ENCODE measurements at regions of chr11 and their contacts with region 1.

Region 1: DNA sequence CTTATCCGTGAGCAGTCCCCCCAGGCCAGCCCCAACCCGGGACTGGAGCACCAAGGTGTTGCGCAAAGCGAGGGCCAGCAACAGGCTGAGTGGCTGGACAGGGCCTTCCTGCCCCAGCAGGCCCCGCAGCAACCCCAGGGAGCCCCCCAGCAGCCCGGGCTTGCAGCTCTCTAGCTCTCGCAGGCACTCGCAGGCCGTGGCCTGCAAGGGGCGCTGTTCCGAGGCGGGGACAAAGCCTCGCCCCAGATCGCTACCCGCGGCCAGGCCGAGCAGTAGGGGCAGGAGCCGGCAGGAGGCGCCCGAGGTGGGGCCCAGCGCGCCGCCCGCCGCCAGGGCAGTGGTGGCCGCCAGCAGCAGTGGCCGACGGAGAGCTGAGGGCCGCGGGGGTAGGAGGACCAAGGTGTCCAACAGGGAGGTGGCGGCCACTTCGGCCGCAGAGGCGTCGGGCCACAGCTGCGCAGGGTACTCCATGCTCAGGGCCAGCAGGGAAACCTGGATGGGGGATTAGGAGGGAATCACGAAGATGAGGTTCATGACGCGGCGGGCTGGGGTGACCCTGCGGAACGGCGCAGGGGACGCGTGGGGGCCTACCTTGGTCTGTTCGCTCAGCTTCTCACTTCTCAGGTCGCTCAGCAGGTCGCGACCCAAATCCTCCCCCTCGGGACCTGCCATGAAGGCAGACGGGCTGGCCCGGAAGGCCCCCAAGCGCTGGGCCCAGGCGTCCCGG is 762 bp downstream of the AP5B1 start:
- DNase-seq: peak; percentile 81 to 92 (median 91)
- H3K4me3 ChIP-seq: peak overlapping the region; percentile 56 to 85 (median 72)
- H3K27ac ChIP-seq: peak overlapping the region in 1 of 2 experiments; percentile 77
- H3K4me1 ChIP-seq: peaks cover 0 to 37% (median 19%) of the 10 kb centered on the region in 4 experiments
- H3K27me3 ChIP-seq: peaks cover 0 to 33% (median 6%) of the 10 kb centered on the region in 5 experiments

Region 2: GRCh38 chr11:65236194-65237059 is 543.6 kb before region 1 on chr11:
- CTCF ChIA-PET with region 1: no interaction called
- POLR2A ChIA-PET with region 1: no interaction called
- DNase-seq: peak in 2 of 3 donors; percentile 22 to 30
- H3K4me3 ChIP-seq: no peak overlapping the region
- H3K27ac ChIP-seq: no peak overlapping the region
- H3K4me1 ChIP-seq: no peaks in the 10 kb centered on the region
- H3K27me3 ChIP-seq: no peaks in the 10 kb centered on the region

Region 3: DNA sequence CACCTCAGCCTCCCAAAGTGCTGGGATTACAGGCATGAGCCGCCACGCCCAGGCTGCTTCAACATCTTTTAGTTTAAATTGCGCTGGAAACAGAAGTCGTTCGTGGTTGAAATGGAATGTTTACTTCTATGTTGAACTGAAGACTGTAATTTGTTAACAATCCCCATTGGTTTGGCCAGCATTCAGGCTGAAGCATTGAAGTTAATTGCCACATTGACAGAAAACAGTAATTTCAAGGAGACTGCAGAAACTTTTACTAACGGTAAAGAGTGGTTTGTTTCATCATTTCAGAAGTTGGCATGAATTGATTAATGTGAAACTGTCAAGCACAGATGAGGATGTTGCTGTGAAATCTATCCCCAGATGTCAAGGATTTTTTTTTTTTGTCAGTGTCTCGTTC is 13.5 kb before region 1 on chr11:
- CTCF ChIA-PET with region 1: interaction called, 26 read pairs
- POLR2A ChIA-PET with region 1: no interaction called
- DNase-seq: peak in 2 of 3 donors; percentile 54 to 66
- H3K4me3 ChIP-seq: no peak overlapping the region
- H3K27ac ChIP-seq: no peak overlapping the region
- H3K4me1 ChIP-seq: peaks cover 0 to 6% (median 2%) of the 10 kb centered on the region in 4 experiments
- H3K27me3 ChIP-seq: no peaks in the 10 kb centered on the region

Region 4: DNA sequence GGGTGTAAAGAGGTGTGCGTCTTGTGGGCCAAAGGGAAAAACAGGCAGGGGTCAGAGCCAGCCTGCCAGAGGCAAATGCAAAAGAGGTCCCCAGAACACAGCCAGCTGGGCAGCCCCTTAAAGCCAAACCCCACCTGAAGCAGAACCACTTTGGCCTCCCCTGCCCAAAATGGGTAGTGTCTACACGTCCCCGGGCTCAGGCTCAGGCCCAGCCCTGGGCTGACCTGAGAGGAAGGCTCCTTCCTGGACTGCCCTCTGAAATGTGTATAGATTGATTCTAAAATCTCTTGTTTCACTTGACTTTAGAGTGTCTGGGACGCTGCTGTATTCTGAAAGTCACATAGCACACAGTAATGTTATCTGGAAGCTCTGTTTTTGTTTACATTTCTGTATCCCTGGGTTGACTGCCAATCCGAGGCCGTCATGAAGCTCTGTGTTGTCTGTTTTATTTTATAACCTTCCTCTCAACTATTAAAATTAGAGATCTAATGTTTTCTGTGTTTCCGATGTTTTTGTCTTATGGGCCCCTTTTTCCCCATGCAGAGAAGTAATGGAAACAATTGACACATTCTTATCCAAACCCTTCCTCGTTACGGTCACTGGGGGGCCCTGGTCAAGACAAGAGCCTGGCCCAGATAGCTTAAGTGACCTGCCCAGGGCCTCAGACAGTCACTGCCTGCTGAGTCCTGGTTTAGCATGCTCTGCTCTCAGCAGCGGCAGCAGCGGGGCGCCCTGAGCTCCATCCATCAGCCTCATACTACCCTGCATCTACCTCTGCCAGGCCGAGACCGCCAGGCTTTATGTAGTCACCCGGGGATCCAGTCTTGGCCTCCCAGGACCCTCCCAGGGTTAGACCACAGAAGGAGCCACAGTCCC is 16.9 kb after region 1 on chr11:
- CTCF ChIA-PET with region 1: interaction called, 81 read pairs
- POLR2A ChIA-PET with region 1: interaction called, 3 read pairs
- DNase-seq: no peak
- H3K4me3 ChIP-seq: no peak overlapping the region
- H3K27ac ChIP-seq: no peak overlapping the region
- H3K4me1 ChIP-seq: peaks cover 0 to 7% (median 6%) of the 10 kb centered on the region in 4 experiments
- H3K27me3 ChIP-seq: peaks cover 0 to 9% (median 0%) of the 10 kb centered on the region in 5 experiments

Region 5: GRCh38 chr11:65810046-65810868 is 30.2 kb after region 1 on chr11:
- CTCF ChIA-PET with region 1: interaction called, 137 read pairs
- POLR2A ChIA-PET with region 1: no interaction called
- DNase-seq: peak in 2 of 3 donors; percentile 40 to 51
- H3K4me3 ChIP-seq: no peak overlapping the region
- H3K27ac ChIP-seq: no peak overlapping the region
- H3K4me1 ChIP-seq: no peaks in the 10 kb centered on the region
- H3K27me3 ChIP-seq: peaks cover 0 to 4% (median 0%) of the 10 kb centered on the region in 5 experiments

Region 6: DNA sequence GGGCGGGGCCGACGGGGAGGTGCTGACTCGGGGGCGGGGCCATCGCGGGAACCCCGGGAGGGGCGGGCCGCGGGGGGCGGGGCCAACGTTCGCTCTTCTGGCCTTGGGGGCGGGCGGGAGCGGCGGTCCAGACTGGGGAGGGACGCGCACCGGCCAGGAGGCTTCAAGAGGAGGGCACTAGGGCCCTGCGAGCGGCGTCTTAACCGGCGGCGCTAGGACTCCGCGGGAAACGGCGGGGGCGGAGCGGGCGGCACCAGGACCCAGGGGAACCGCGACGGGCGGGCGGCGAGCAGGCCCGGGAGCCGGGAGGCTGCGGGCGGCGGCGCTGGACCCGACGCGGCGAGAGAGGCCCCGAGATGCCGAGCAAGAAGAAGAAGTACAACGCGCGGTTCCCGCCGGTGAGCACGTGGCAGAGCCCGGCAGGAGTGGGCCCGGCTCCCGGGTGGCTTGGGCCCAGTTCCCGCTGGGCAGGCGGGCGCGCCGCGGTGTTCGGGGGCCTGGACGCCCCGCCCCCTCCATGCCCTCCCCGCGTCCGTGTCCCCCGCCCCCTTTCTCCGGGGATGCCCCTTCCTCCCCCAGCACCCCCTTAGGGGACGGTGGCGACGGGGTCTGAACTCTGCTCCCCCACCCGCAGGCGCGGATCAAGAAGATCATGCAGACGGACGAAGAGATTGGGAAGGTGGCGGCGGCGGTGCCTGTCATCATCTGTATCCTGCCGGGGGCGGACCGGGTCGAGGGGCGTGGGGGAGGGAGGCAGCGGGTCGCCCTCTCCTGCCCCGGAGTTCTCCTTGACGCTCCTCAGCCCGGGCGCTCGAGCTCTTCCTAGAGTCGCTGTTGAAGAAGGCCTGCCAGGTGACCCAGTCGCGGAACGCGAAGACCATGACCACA is 139.4 kb after region 1 on chr11 and contains the start of gene DRAP1:
- CTCF ChIA-PET with region 1: no interaction called
- POLR2A ChIA-PET with region 1: no interaction called
- DNase-seq: peak; percentile 98 to 100 (median 99)
- H3K4me3 ChIP-seq: peak within 1 kb of the TSS; percentile 71 to 99 (median 97)
- H3K27ac ChIP-seq: peak within 1 kb of the TSS; percentile 85 to 95
- H3K4me1 ChIP-seq: peaks cover 0 to 62% (median 48%) of the 10 kb centered on the region in 4 experiments
- H3K27me3 ChIP-seq: no peaks in the 10 kb centered on the region

Measured in common myeloid progenitor, CD34-positive (primary cell).